ENCODE measurements at regions of chr10 and their contacts with region 1.

Region 1: GRCh38 chr10:117736684-117737083 is 194.1 kb downstream of the EMX2 start:
- DNase-seq: no peak
- ATAC-seq: no peak
- H3K4me3 Mint-ChIP-seq: no peak overlapping the region
- H3K27ac Mint-ChIP-seq: no peak overlapping the region
- H3K4me1 Mint-ChIP-seq: no peaks in the 10 kb centered on the region
- H3K27me3 Mint-ChIP-seq: peaks cover 26% of the 10 kb centered on the region

Region 2: GRCh38 chr10:117543245-117544003 is 193.3 kb before region 1 on chr10:
- CTCF ChIA-PET with region 1: no interaction called
- POLR2A ChIA-PET with region 1: no interaction called
- intact Hi-C with region 1: loop called (anchors 5 to 10 kb)
- DNase-seq: peak; percentile 64
- ATAC-seq: peak; percentile 23
- H3K4me3 Mint-ChIP-seq: peak overlapping the region; percentile 30
- H3K27ac Mint-ChIP-seq: no peak overlapping the region
- H3K4me1 Mint-ChIP-seq: peaks cover 31% of the 10 kb centered on the region
- H3K27me3 Mint-ChIP-seq: peaks cover 73% of the 10 kb centered on the region

Measured in activated CD4-positive, alpha-beta T cell treated with anti-CD3 and anti-CD28 coated beads for 36 hours (primary cell).